ENCODE measurements at regions of chr5 and their contacts with region 1.

Region 1: GRCh38 chr5:94968507-94969095 is 316.3 kb downstream of the MCTP1 start:
- DNase-seq: peak; percentile 34
- H3K4me3 ChIP-seq: no peak overlapping the region; a peak in 1 of 4 replicates
- H3K27ac ChIP-seq: no peak overlapping the region
- H3K4me1 ChIP-seq: no peaks in the 10 kb centered on the region
- H3K27me3 ChIP-seq: no peaks in the 10 kb centered on the region
- CTCF ChIP-seq: peak; percentile 85
- EP300 ChIP-seq: no peak
- RAD21 ChIP-seq: peak; percentile 79

Region 2: GRCh38 chr5:95261437-95262175 is 293.0 kb after region 1 on chr5:
- CTCF ChIA-PET with region 1: interaction called, 37 read pairs
- POLR2A ChIA-PET with region 1: no interaction called
- DNase-seq: no peak
- H3K4me3 ChIP-seq: no peak overlapping the region
- H3K27ac ChIP-seq: no peak overlapping the region
- H3K4me1 ChIP-seq: no peaks in the 10 kb centered on the region
- H3K27me3 ChIP-seq: peaks cover 13% of the 10 kb centered on the region
- CTCF ChIP-seq: peak; percentile 70
- EP300 ChIP-seq: no peak
- RAD21 ChIP-seq: peak; percentile 66